Activated CD4-positive, alpha-beta T cell treated with anti-CD3 and anti-CD28 coated beads for 36 hours (primary cell): ENCODE measurements at regions of chr3 and their contacts with region 1.

Region 1: DNA sequence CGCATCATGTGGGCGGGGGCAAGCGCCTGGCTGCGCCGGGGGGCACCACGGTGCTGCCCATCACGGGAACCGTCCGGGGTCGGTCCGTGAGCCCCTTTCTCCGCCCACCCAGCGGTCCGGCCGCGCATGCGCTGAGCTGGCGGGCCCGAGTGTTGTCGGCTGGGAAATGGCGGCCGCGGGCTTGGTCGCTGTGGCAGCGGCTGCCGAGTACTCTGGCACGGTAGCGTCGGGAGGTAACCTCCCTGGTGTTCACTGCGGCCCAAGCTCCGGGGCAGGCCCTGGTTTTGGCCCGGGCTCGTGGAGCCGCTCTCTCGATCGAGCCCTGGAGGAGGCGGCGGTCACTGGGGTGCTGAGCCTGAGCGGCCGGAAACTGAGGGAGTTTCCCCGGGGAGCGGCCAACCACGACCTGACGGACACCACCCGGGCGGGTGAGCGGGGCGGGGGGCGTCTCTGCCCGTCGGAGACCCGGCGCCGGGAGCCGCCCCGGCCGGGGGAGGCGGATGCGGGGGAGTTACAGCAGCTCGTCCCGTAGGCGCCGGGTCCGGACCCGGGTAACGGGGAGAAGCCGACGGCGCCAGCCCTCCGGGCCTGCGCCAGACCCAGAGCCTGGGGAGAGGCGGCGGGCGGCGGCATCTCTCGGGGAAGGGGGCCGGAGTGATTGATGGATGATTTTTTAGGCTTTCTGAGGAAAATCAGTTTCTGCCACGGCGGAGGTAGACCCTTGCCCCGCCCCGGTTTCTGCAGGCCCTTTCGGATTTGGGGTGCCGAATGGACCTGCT is at the start of gene LRCH3:
- DNase-seq: peak; percentile 88
- ATAC-seq: peak; percentile 70
- H3K4me3 Mint-ChIP-seq: peak within 1 kb of the TSS; percentile 97
- H3K27ac Mint-ChIP-seq: peak within 1 kb of the TSS; percentile 97
- H3K4me1 Mint-ChIP-seq: peaks cover 48% of the 10 kb centered on the region
- H3K27me3 Mint-ChIP-seq: no peaks in the 10 kb centered on the region
- total RNA-seq, gene LRCH3: 43.6 to 77.5 TPM

Region 2: DNA sequence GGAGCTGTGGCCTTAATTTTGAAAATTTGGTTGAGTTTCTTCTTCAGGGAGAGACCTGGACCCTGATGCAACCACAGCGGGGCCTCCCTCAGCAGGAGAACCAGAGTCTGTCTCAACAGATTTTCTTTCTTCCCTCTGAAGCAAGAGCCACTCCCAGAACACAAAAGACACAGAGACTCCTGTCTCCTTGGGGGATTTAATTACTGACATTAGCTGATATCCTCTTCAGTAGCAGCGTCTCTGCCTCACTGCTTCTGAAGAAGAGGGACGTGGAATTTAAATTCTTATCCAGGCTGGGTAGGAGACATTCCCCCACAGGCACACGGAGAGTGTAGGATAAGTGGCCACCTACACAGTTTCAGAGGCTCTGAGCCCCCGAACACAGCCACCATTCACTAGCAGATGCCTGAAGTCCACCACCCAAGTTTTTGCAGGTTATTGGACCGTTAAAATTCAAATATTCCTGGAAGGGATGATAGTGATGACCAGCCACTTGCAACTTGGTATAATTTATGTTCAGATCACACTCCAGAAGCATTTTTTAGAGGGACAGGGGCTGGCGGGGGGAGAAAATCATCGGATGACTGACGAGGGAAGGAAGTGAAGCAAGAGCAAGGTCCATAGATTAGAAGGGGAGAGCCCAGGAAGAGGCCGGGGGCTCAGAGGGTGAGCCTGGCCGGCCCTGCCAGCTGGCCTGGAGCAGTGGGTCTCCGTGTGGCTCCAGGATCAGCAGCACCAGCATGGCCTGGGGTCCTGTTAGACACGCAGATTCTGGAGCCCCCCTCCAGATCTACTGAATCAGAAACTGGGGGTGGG is 345.2 kb before region 1 on chr3:
- CTCF ChIA-PET with region 1: no interaction called
- POLR2A ChIA-PET with region 1: no interaction called
- intact Hi-C with region 1: no loop called
- DNase-seq: no peak
- ATAC-seq: no peak
- H3K4me3 Mint-ChIP-seq: no peak overlapping the region
- H3K27ac Mint-ChIP-seq: no peak overlapping the region
- H3K4me1 Mint-ChIP-seq: peaks cover 11% of the 10 kb centered on the region
- H3K27me3 Mint-ChIP-seq: peaks cover 4% of the 10 kb centered on the region

Region 3: GRCh38 chr3:197478746-197479668 is 312.3 kb before region 1 on chr3:
- CTCF ChIA-PET with region 1: no interaction called
- POLR2A ChIA-PET with region 1: no interaction called
- intact Hi-C with region 1: no loop called
- DNase-seq: no peak
- ATAC-seq: no peak
- H3K4me3 Mint-ChIP-seq: no peak overlapping the region
- H3K27ac Mint-ChIP-seq: no peak overlapping the region
- H3K4me1 Mint-ChIP-seq: no peaks in the 10 kb centered on the region
- H3K27me3 Mint-ChIP-seq: peaks cover 15% of the 10 kb centered on the region

Region 4: DNA sequence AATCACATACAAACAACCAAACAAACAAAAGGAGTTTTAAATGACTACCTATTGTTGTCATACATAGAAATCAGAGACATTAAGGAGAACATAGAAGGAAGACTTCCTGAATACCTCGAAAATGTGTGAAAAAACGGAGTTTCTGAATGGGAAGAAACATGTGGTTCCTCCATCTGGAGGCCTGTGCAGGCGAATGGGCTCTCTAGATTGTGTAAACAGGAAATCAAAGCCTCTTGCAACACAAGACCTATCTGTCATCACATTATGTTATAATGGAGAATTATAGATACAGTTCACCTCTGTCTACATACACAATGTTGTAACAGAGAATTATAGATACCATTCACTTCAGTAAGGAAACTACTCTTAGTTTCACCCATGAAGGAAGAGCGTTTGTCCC is 98.7 kb before region 1 on chr3:
- CTCF ChIA-PET with region 1: no interaction called
- POLR2A ChIA-PET with region 1: no interaction called
- intact Hi-C with region 1: no loop called
- DNase-seq: no peak
- ATAC-seq: no peak
- H3K4me3 Mint-ChIP-seq: no peak overlapping the region
- H3K27ac Mint-ChIP-seq: no peak overlapping the region
- H3K4me1 Mint-ChIP-seq: no peaks in the 10 kb centered on the region
- H3K27me3 Mint-ChIP-seq: no peaks in the 10 kb centered on the region

Region 5: GRCh38 chr3:197711973-197712707 is 79.2 kb before region 1 on chr3:
- CTCF ChIA-PET with region 1: no interaction called
- POLR2A ChIA-PET with region 1: interaction called, 4 read pairs
- intact Hi-C with region 1: loop called (anchors 1 kb)
- DNase-seq: peak; percentile 94
- ATAC-seq: peak; percentile 98
- H3K4me3 Mint-ChIP-seq: peak overlapping the region; percentile 51
- H3K27ac Mint-ChIP-seq: peak overlapping the region; percentile 89
- H3K4me1 Mint-ChIP-seq: peaks cover 36% of the 10 kb centered on the region
- H3K27me3 Mint-ChIP-seq: no peaks in the 10 kb centered on the region

Region 6: GRCh38 chr3:197749601-197750395 is 41.5 kb before region 1 on chr3 and contains the start of gene FYTTD1:
- CTCF ChIA-PET with region 1: interaction called, 4 read pairs
- POLR2A ChIA-PET with region 1: interaction called, 3 read pairs
- intact Hi-C with region 1: loop called (anchors 1 to 5 kb)
- DNase-seq: peak; percentile 89
- ATAC-seq: peak; percentile 81
- H3K4me3 Mint-ChIP-seq: peak within 1 kb of the TSS; percentile 89
- H3K27ac Mint-ChIP-seq: peak within 1 kb of the TSS; percentile 87
- H3K4me1 Mint-ChIP-seq: peaks cover 37% of the 10 kb centered on the region
- H3K27me3 Mint-ChIP-seq: no peaks in the 10 kb centered on the region
- total RNA-seq, gene FYTTD1: 20.7 to 25.6 TPM

Region 7: DNA sequence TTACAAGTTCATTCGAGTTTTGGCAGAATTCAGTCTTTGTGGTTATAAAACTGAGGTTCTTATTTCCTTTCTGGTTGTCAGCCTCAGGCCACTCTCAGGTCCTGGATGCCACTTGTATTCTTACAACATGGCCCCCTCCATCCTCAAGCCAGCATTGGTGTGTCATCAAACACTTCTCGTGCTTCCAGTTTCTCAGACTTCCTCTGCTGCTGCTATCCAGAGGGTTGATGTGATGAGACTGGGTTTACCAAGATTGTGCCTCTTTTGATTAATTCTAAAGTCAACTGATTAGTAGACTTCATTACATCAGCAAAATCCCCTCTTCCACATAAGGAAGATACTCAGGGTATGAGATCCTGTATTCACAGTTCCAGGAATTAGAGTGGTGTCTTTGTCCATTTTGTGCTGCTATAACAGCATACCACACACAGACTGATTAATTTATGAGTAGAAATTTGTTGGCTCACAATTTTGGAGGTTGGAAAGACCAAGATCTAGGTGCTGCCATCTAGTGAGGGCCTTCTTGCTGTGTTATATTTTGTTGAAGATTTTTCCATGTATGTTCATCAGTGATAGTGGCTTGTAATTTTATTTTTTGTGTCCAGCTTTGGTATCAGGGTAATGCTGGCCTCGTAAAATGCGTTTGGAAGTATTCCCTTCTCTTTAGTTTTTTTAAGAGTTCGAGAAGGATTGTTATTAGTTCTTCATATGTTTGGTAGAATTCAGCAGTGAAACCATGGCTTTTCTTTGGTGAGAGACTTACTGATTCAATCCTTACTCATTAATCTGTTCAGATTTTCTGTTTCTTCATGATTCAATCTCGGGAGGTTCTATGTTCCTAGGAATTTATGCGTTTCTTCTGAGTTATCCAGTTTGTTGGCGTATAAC is 10.8 kb after region 1 on chr3:
- CTCF ChIA-PET with region 1: interaction called, 10 read pairs
- POLR2A ChIA-PET with region 1: no interaction called
- intact Hi-C with region 1: loop called in 1 of 2 experiments (anchors 1 kb)
- DNase-seq: peak; percentile 48
- ATAC-seq: peak; percentile 65
- H3K4me3 Mint-ChIP-seq: no peak overlapping the region
- H3K27ac Mint-ChIP-seq: peak overlapping the region; percentile 9
- H3K4me1 Mint-ChIP-seq: peaks cover 52% of the 10 kb centered on the region
- H3K27me3 Mint-ChIP-seq: no peaks in the 10 kb centered on the region

Region 8: DNA sequence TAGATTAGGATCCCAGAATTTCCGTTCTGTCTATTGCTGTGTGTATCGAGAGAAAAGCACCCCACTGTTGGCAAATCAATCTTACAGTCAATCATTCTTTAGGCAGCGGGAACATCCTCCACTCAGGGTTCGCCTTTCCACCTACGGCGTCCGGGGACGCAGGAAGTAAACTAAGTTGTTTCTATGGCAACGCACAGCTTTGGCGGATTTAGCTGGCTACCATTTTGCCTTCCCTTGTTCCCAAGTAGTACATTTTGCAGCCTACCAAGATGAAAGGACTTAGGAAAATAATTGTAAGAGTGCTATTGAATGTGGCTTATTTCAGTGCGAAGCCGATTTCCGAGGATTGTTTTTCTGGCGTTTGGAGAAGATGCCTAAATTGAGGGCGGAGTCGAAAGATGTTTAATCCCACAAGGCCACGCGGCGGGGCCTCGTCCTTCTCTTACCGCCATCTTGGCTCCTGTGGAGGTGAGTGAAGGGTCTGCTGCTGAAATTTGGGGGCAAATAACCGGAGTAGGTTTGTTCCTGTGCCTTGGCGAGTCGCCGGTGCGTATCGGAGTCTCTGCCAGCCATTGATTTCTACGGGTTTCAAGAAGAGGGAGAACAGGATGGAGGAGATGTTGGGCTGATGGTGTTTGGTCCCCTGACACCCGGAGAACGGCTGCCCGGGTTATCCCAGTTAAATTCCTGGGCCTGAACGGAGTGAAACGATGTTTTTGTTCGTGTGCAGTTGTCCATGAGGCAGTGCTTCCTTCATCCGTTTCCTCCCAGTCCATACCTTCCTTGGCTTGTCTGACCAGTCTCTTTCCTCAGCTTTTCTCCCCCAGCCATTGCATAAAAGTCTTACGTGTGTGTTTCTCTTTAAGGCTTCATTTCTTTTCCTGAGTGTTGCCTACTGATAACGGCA is 158.7 kb after region 1 on chr3 and contains the start of gene RPL35A:
- CTCF ChIA-PET with region 1: no interaction called
- POLR2A ChIA-PET with region 1: no interaction called
- intact Hi-C with region 1: loop called in 1 of 2 experiments (anchors 2 kb)
- DNase-seq: peak; percentile 90
- ATAC-seq: peak; percentile 89
- H3K4me3 Mint-ChIP-seq: peak within 1 kb of the TSS; percentile 87
- H3K27ac Mint-ChIP-seq: peak within 1 kb of the TSS; percentile 97
- H3K4me1 Mint-ChIP-seq: peaks cover 47% of the 10 kb centered on the region
- H3K27me3 Mint-ChIP-seq: no peaks in the 10 kb centered on the region
- total RNA-seq, gene RPL35A: 1,121 to 1,734 TPM

Region 9: GRCh38 chr3:198071602-198072285 is 280.4 kb after region 1 on chr3:
- CTCF ChIA-PET with region 1: no interaction called
- POLR2A ChIA-PET with region 1: no interaction called
- intact Hi-C with region 1: loop called in 1 of 2 experiments (anchors 5 kb)
- DNase-seq: peak; percentile 77
- ATAC-seq: peak; percentile 100
- H3K4me3 Mint-ChIP-seq: peak overlapping the region; percentile 36
- H3K27ac Mint-ChIP-seq: peak overlapping the region; percentile 95
- H3K4me1 Mint-ChIP-seq: peaks cover 43% of the 10 kb centered on the region
- H3K27me3 Mint-ChIP-seq: peaks cover 12% of the 10 kb centered on the region